T-cell (primary cell): ENCODE measurements at regions of chr6 and their contacts with region 1.

Region 1: DNA sequence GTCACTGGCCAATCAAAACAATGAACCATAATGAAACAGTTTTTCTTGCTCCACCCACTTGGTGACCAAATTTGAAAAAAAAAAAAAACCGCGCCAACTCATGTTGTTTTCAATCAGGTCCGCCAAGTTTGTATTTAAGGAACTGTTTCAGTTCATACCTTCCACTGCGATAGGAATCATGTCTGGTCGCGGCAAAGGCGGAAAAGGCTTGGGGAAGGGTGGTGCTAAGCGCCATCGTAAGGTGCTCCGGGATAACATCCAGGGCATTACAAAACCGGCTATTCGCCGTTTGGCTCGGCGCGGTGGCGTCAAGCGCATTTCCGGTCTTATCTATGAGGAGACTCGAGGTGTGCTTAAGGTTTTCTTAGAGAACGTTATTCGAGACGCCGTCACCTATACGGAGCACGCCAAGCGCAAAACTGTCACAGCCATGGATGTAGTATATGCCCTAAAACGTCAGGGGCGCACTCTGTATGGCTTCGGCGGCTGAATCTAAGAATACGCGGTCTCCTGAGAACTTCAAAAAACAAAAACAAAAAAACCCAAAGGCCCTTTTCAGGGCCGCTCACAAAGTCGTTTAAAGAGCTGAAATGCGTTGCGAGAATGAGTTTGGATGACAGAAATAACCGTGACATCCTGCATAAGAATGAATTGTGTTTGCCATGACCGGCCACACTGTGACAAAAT is 16.7 kb downstream of the HFE start:
- DNase-seq: peak; percentile 82 to 95 (median 89)
- ATAC-seq: peak; percentile 87 to 92 (median 90)
- H3K4me3 ChIP-seq: peak overlapping the region; percentile 40 to 68
- H3K4me3 Mint-ChIP-seq: peak overlapping the region; percentile 78 to 91 (median 89)
- H3K27ac ChIP-seq: peak overlapping the region; percentile 85
- H3K27ac Mint-ChIP-seq: peak overlapping the region; percentile 96 to 99
- H3K4me1 ChIP-seq: peaks cover 7 to 12% of the 10 kb centered on the region in 2 experiments
- H3K4me1 Mint-ChIP-seq: peaks cover 15 to 18% (median 16%) of the 10 kb centered on the region in 3 donors
- H3K27me3 ChIP-seq: peaks cover 0 to 4% of the 10 kb centered on the region in 2 experiments
- H3K27me3 Mint-ChIP-seq: peaks cover 0 to 3% of the 10 kb centered on the region in 2 donors

Region 2: GRCh38 chr6:25874822-25875562 is 228.9 kb before region 1 on chr6:
- CTCF ChIA-PET with region 1: no interaction called
- POLR2A ChIA-PET with region 1: no interaction called
- DNase-seq: peak in 1 of 35 experiments; percentile 29
- ATAC-seq: peak; percentile 54 to 76 (median 64)
- H3K4me3 ChIP-seq: no peak overlapping the region
- H3K4me3 Mint-ChIP-seq: no peak overlapping the region
- H3K27ac ChIP-seq: no peak overlapping the region
- H3K27ac Mint-ChIP-seq: peak overlapping the region in 1 of 2 donors; percentile 3
- H3K4me1 ChIP-seq: peaks cover 6 to 12% of the 10 kb centered on the region in 2 experiments
- H3K4me1 Mint-ChIP-seq: peaks cover 22 to 39% (median 31%) of the 10 kb centered on the region in 3 donors
- H3K27me3 ChIP-seq: no peaks in the 10 kb centered on the region
- H3K27me3 Mint-ChIP-seq: no peaks in the 10 kb centered on the region

Region 3: GRCh38 chr6:26031595-26032339 is 72.1 kb before region 1 on chr6:
- CTCF ChIA-PET with region 1: interaction called in 1 of 2 experiments, 8 read pairs
- POLR2A ChIA-PET with region 1: interaction called, 6 to 11 read pairs
- DNase-seq: peak; percentile 61 to 95 (median 87)
- ATAC-seq: peak; percentile 68 to 72 (median 70)
- H3K4me3 ChIP-seq: peak overlapping the region; percentile 61 to 84
- H3K4me3 Mint-ChIP-seq: peak overlapping the region; percentile 90 to 95 (median 92)
- H3K27ac ChIP-seq: peak overlapping the region; percentile 74
- H3K27ac Mint-ChIP-seq: peak overlapping the region; percentile 94 to 98
- H3K4me1 ChIP-seq: peaks cover 30 to 32% of the 10 kb centered on the region in 2 experiments
- H3K4me1 Mint-ChIP-seq: peaks cover 48 to 53% (median 50%) of the 10 kb centered on the region in 3 donors
- H3K27me3 ChIP-seq: no peaks in the 10 kb centered on the region
- H3K27me3 Mint-ChIP-seq: peaks cover 0 to 2% of the 10 kb centered on the region in 2 donors

Region 4: GRCh38 chr6:26054857-26055669 is 48.9 kb before region 1 on chr6:
- CTCF ChIA-PET with region 1: interaction called in 1 of 2 experiments, 3 read pairs
- POLR2A ChIA-PET with region 1: interaction called, 5 to 24 read pairs
- DNase-seq: peak; percentile 63 to 95 (median 86)
- ATAC-seq: peak; percentile 60 to 73 (median 67)
- H3K4me3 ChIP-seq: peak overlapping the region; percentile 87 to 98
- H3K4me3 Mint-ChIP-seq: peak overlapping the region; percentile 95 to 97 (median 96)
- H3K27ac ChIP-seq: peak overlapping the region; percentile 96
- H3K27ac Mint-ChIP-seq: peak overlapping the region; percentile 97 to 100
- H3K4me1 ChIP-seq: peaks cover 16 to 26% of the 10 kb centered on the region in 2 experiments
- H3K4me1 Mint-ChIP-seq: peaks cover 21 to 26% (median 23%) of the 10 kb centered on the region in 3 donors
- H3K27me3 ChIP-seq: no peaks in the 10 kb centered on the region
- H3K27me3 Mint-ChIP-seq: no peaks in the 10 kb centered on the region

Region 5: GRCh38 chr6:26087284-26088115 is 16.4 kb before region 1 on chr6 and contains the start of gene HFE:
- CTCF ChIA-PET with region 1: interaction called in 1 of 2 experiments, 13 read pairs
- POLR2A ChIA-PET with region 1: interaction called, 3 to 13 read pairs
- DNase-seq: peak in 20 of 35 experiments; percentile 3 to 48 (median 20)
- ATAC-seq: peak; percentile 13 to 33 (median 20)
- H3K4me3 ChIP-seq: peak within 1 kb of the TSS; percentile 61 to 92
- H3K4me3 Mint-ChIP-seq: peak within 1 kb of the TSS; percentile 86 to 87 (median 86)
- H3K27ac ChIP-seq: peak within 1 kb of the TSS; percentile 60
- H3K27ac Mint-ChIP-seq: peak within 1 kb of the TSS; percentile 86 to 90
- H3K4me1 ChIP-seq: peaks cover 17 to 31% of the 10 kb centered on the region in 2 experiments
- H3K4me1 Mint-ChIP-seq: peaks cover 31 to 49% (median 32%) of the 10 kb centered on the region in 3 donors
- H3K27me3 ChIP-seq: no peaks in the 10 kb centered on the region
- H3K27me3 Mint-ChIP-seq: no peaks in the 10 kb centered on the region
- total RNA-seq, gene HFE: 1.0 to 2.4 (median 1.8) TPM

Region 6: GRCh38 chr6:26183581-26184366 is 79.9 kb after region 1 on chr6:
- CTCF ChIA-PET with region 1: no interaction called
- POLR2A ChIA-PET with region 1: interaction called in 1 of 2 experiments, 21 read pairs
- DNase-seq: peak in 25 of 35 experiments; percentile 20 to 85 (median 42)
- ATAC-seq: peak; percentile 87 to 91 (median 89)
- H3K4me3 ChIP-seq: peak overlapping the region; percentile 57 to 83
- H3K4me3 Mint-ChIP-seq: peak overlapping the region; percentile 88 to 96 (median 93)
- H3K27ac ChIP-seq: peak overlapping the region; percentile 76
- H3K27ac Mint-ChIP-seq: peak overlapping the region; percentile 94 to 98
- H3K4me1 ChIP-seq: peaks cover 12 to 30% of the 10 kb centered on the region in 2 experiments
- H3K4me1 Mint-ChIP-seq: peaks cover 42 to 48% (median 46%) of the 10 kb centered on the region in 3 donors
- H3K27me3 ChIP-seq: no peaks in the 10 kb centered on the region
- H3K27me3 Mint-ChIP-seq: no peaks in the 10 kb centered on the region

Region 7: DNA sequence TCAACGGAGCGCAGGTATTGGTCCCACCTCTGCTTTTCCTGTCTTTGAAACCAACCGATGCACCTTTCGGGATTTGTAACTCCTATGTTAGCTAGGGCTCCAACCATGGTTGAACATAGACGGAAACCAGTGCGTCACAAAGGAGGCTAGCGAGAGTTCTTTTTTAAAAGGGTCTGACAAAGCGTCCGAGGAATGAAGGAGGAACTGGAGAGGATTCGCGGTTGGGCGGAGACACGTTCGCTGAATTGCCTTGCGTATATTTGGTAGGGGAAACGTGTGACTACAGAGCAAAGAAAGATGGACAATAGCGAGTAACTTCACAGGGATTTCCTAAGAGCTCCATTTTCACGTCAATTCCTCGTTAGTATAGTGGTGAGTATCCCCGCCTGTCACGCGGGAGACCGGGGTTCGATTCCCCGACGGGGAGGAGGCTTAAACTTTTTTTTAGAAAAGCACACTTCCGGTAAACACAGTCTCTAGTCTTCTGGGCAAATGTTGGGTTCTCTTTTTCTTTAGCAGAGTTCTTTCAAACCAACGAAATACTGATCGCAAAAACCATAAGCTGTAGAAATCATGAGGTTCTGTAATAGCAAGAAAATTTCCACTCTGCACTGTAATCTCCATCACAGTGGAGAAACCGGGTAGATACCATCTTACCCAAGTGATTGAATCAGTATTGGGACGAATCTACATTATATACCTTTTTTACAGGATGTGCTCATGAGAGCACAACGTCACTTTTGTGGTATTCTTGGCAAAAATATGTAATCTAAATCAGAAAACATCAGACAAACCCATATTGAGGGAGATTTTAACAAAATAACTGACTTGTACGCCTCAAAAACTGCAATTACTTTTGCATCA is 1375.6 kb after region 1 on chr6:
- CTCF ChIA-PET with region 1: no interaction called
- POLR2A ChIA-PET with region 1: interaction called in 1 of 2 experiments, 16 read pairs
- DNase-seq: peak; percentile 72 to 94 (median 87)
- ATAC-seq: peak; percentile 72 to 84 (median 78)
- H3K4me3 ChIP-seq: peak overlapping the region; percentile 63 to 97
- H3K4me3 Mint-ChIP-seq: no peak overlapping the region
- H3K27ac ChIP-seq: peak overlapping the region; percentile 92
- H3K27ac Mint-ChIP-seq: no peak overlapping the region
- H3K4me1 ChIP-seq: peaks cover 11 to 15% of the 10 kb centered on the region in 2 experiments
- H3K4me1 Mint-ChIP-seq: peaks cover 0 to 11% (median 4%) of the 10 kb centered on the region in 3 donors
- H3K27me3 ChIP-seq: no peaks in the 10 kb centered on the region
- H3K27me3 Mint-ChIP-seq: no peaks in the 10 kb centered on the region